Natural killer cell (primary cell): ENCODE measurements at regions of chr6 and their contacts with region 1.

Region 1: DNA sequence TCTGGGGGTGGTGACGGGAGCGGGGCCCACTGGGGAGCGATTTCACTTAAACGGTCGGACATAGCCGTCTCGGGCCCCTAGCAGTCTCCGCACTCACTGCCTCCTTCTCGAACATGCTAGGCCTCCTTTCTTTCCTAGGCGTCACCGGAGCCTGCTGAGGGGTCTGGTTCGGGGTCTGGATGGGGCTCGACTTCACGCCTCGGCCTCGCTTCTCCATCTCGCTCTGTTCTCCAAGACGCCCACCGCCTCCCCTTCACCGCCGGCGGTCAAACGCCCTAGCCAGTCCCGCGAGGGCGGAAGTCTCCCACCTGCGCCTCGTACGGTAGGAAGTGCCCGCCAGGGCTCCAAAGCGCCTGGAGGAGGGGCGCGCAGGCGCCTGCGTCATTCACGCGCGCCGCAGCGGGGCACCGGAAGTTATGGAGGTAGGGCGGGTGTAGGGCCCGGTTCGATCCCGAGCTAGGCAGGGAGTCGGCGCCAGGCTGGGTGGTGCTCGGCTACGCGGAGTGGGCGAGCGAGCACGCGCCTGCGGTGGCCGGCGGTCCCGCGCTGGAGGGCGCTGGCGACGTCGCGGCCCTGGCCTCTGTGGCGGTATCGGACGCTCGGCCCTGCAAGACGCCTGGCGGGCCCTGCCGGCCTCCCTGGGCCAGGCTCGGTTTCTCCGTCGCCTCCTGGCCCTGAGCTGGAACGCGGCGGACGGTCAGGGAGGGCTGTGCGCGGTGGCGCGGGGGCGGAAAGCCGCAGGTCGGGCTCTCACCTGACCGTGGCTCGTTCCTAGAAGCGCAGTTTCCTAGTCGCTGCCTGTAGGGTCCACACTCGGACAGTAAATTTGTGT is at the starts of genes DYNLT2 and ERMARD:
- DNase-seq: peak; percentile 95 to 96
- ATAC-seq: peak; percentile 93 to 99 (median 96)
- H3K4me3 ChIP-seq: peak within 1 kb of the TSS; percentile 79
- H3K4me3 Mint-ChIP-seq: peak within 1 kb of the TSS; percentile 98
- H3K27ac ChIP-seq: peak within 1 kb of the TSS; percentile 94
- H3K27ac Mint-ChIP-seq: peak within 1 kb of the TSS; percentile 99 to 100
- H3K4me1 ChIP-seq: peaks cover 8% of the 10 kb centered on the region
- H3K4me1 Mint-ChIP-seq: peaks cover 38 to 42% of the 10 kb centered on the region in 2 donors
- H3K27me3 ChIP-seq: no peaks in the 10 kb centered on the region
- H3K27me3 Mint-ChIP-seq: peaks cover 0 to 1% of the 10 kb centered on the region in 2 donors
- CTCF ChIP-seq: no peak
- total RNA-seq, gene DYNLT2: 4.0 to 6.8 (median 5.3) TPM
- total RNA-seq, gene ERMARD: 33.9 to 42.2 (median 36.4) TPM

Region 2: GRCh38 chr6:169487579-169488436 is 263.6 kb before region 1 on chr6:
- intact Hi-C with region 1: no loop called
- DNase-seq: no peak
- ATAC-seq: no peak
- H3K4me3 ChIP-seq: no peak overlapping the region
- H3K4me3 Mint-ChIP-seq: no peak overlapping the region
- H3K27ac ChIP-seq: no peak overlapping the region
- H3K27ac Mint-ChIP-seq: no peak overlapping the region
- H3K4me1 ChIP-seq: no peaks in the 10 kb centered on the region
- H3K4me1 Mint-ChIP-seq: no peaks in the 10 kb centered on the region
- H3K27me3 ChIP-seq: no peaks in the 10 kb centered on the region
- H3K27me3 Mint-ChIP-seq: peaks cover 7 to 8% of the 10 kb centered on the region in 2 donors
- CTCF ChIP-seq: no peak

Region 3: GRCh38 chr6:169669889-169670288 is 81.6 kb before region 1 on chr6:
- intact Hi-C with region 1: no loop called
- DNase-seq: no peak
- ATAC-seq: peak in 1 of 3 donors; percentile 76
- H3K4me3 ChIP-seq: no peak overlapping the region
- H3K4me3 Mint-ChIP-seq: no peak overlapping the region
- H3K27ac ChIP-seq: no peak overlapping the region
- H3K27ac Mint-ChIP-seq: no peak overlapping the region
- H3K4me1 ChIP-seq: no peaks in the 10 kb centered on the region
- H3K4me1 Mint-ChIP-seq: peaks cover 0 to 8% of the 10 kb centered on the region in 2 donors
- H3K27me3 ChIP-seq: no peaks in the 10 kb centered on the region
- H3K27me3 Mint-ChIP-seq: no peaks in the 10 kb centered on the region
- CTCF ChIP-seq: no peak

Region 4: GRCh38 chr6:169723200-169723909 is 28.1 kb before region 1 on chr6:
- intact Hi-C with region 1: loop called (anchors 2 kb)
- DNase-seq: peak; percentile 59 to 80
- ATAC-seq: peak; percentile 42 to 55 (median 52)
- H3K4me3 ChIP-seq: peak overlapping the region; percentile 74
- H3K4me3 Mint-ChIP-seq: peak overlapping the region; percentile 93
- H3K27ac ChIP-seq: peak overlapping the region; percentile 67
- H3K27ac Mint-ChIP-seq: peak overlapping the region; percentile 86 to 93
- H3K4me1 ChIP-seq: peaks cover 16% of the 10 kb centered on the region
- H3K4me1 Mint-ChIP-seq: peaks cover 12 to 16% of the 10 kb centered on the region in 2 donors
- H3K27me3 ChIP-seq: no peaks in the 10 kb centered on the region
- H3K27me3 Mint-ChIP-seq: no peaks in the 10 kb centered on the region
- CTCF ChIP-seq: no peak

Region 5: DNA sequence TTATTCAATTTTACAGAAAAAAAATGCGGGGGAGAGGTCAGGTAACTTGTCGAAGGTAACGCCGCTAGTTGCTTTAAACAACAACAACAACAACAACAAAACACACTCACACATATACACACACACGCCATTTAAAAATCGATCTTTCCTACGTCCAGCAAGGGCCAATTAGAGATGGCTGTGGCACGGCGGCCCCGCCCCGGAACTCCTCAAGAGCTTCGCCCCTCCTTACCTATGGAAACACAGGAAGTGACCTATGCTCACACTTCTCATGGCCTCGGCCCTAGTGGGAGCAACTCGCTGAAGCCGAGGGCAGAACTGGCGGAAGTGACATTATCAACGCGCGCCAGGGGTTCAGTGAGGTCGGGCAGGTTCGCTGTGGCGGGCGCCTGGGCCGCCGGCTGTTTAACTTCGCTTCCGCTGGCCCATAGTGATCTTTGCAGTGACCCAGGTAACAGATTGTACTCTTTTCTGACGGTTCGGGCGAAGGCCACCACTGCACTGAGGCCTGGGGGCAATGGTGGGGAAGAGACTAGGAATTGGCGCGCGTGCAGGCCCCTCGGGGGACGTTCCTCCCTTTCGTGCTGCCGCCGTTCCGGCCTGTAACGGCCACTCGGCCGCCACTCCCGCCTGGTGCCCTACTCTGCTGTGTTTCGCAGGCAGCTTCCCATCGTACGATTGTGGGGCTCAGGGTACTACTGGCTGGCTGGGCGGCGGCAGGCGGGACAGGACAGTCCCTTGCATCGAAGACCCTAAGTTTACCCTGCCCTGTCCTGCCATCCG is 802.7 kb after region 1 on chr6 and contains the start of gene TBP:
- intact Hi-C with region 1: loop called (anchors 1 kb)
- DNase-seq: peak; percentile 98 to 99
- ATAC-seq: peak; percentile 88 to 97 (median 92)
- H3K4me3 ChIP-seq: peak within 1 kb of the TSS; percentile 84
- H3K4me3 Mint-ChIP-seq: no peak within 1 kb of the TSS
- H3K27ac ChIP-seq: peak within 1 kb of the TSS; percentile 93
- H3K27ac Mint-ChIP-seq: no peak within 1 kb of the TSS
- H3K4me1 ChIP-seq: peaks cover 22% of the 10 kb centered on the region
- H3K4me1 Mint-ChIP-seq: peaks cover 5 to 31% of the 10 kb centered on the region in 2 donors
- H3K27me3 ChIP-seq: no peaks in the 10 kb centered on the region
- H3K27me3 Mint-ChIP-seq: no peaks in the 10 kb centered on the region
- CTCF ChIP-seq: no peak
- total RNA-seq, gene TBP: 13.0 to 18.4 (median 14.2) TPM